SK-N-SH (cell line): ENCODE measurements at regions of chr1 and their contacts with region 1.

Region 1: GRCh38 chr1:204989266-204990058 is 53.5 kb upstream of the CNTN2 start:
- DNase-seq: peak; percentile 95
- H3K4me3 ChIP-seq: no peak overlapping the region; a peak in 1 of 4 replicates
- H3K27ac ChIP-seq: no peak overlapping the region
- H3K4me1 ChIP-seq: peaks cover 0 to 2% of the 10 kb centered on the region in 2 experiments; a peak in 2 of 4 replicates
- H3K27me3 ChIP-seq: no peaks in the 10 kb centered on the region
- CTCF ChIP-seq: peak; percentile 98
- EP300 ChIP-seq: no peak
- RAD21 ChIP-seq: peak; percentile 99

Region 2: DNA sequence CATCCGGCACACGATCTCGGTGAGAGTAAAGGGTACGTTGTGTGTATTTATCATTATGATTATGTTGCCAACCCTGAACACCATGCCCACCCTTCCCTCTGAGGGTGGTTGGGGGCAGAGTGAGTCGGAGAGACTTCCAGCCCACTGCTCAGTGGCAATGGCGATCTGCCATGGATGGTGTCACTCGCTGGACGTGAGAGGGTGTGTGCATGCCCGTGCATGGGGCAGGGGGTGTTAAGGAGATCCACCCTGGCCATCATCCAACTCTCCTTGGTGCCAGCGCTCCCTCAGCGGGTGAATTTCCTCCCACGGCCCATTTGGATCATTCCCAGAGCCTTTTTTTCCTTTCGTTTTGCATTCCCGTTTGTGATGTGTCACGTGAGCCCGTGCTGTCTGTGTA is 20.5 kb before region 1 on chr1:
- CTCF ChIA-PET with region 1: interaction called, 123 read pairs
- POLR2A ChIA-PET with region 1: no interaction called
- DNase-seq: no peak
- H3K4me3 ChIP-seq: no peak overlapping the region
- H3K27ac ChIP-seq: no peak overlapping the region
- H3K4me1 ChIP-seq: peaks cover 0 to 11% of the 10 kb centered on the region in 2 experiments; a peak in 2 of 4 replicates
- H3K27me3 ChIP-seq: no peaks in the 10 kb centered on the region
- CTCF ChIP-seq: no peak
- EP300 ChIP-seq: no peak
- RAD21 ChIP-seq: no peak

Region 3: GRCh38 chr1:205013683-205014367 is 24.4 kb after region 1 on chr1:
- CTCF ChIA-PET with region 1: interaction called, 13 read pairs
- POLR2A ChIA-PET with region 1: no interaction called
- DNase-seq: peak; percentile 71
- H3K4me3 ChIP-seq: no peak overlapping the region
- H3K27ac ChIP-seq: peak overlapping the region in 1 of 2 experiments; percentile 47; a peak in 1 of 4 replicates
- H3K4me1 ChIP-seq: peaks cover 0 to 17% of the 10 kb centered on the region in 2 experiments; a peak in 3 of 4 replicates
- H3K27me3 ChIP-seq: no peaks in the 10 kb centered on the region
- CTCF ChIP-seq: no peak
- EP300 ChIP-seq: no peak
- RAD21 ChIP-seq: no peak

Region 4: DNA sequence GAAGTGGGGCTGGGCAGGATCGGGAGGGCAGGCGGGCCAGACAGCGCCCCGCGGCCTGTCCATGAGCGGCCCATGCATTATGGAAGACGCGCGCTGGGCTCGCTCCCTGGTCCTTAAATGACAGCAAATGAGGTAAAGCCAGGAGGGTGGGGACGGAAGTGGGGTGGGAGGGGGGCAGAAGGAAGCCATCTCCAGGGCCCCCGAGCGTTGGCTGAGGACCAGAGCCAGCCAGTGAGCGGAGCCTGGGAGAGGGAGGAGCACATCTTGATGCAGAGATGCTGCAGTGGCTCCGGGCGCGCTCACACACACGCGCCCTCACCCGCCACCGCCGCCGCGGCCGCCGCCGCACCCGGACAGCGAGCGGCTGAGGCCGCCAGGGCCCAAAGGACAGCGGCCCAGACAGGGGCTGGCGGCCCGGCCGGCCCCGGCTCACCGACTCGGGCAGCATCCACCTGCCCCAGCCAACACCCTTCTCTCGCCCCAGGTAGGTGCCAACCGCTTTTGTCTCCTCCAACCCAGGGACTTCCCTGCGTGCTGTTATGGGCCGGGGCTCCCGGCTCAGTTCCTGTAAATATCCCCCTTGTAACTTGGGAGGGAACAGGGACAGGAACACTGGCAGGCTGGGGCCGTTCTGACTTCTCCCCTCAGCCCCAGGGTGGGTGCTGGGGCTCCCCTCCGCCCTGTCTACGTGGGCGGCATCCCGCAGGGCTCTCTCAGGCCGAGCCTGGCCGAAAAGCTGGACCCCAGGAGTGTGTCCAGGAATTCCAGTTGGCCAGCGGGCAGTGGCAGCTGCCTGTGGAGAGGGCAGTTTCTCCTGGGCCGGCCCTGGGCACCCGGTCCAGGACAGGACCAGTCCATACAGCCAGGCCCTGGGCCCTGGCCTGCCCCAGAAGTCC is 53.7 kb after region 1 on chr1 and contains the start of gene CNTN2:
- CTCF ChIA-PET with region 1: interaction called, 756 read pairs
- POLR2A ChIA-PET with region 1: no interaction called
- DNase-seq: peak; percentile 93
- H3K4me3 ChIP-seq: no peak within 1 kb of the TSS; a peak in 1 of 4 replicates
- H3K27ac ChIP-seq: no peak within 1 kb of the TSS
- H3K4me1 ChIP-seq: peaks cover 0 to 7% of the 10 kb centered on the region in 2 experiments; a peak in 1 of 4 replicates
- H3K27me3 ChIP-seq: peaks cover 60% of the 10 kb centered on the region
- CTCF ChIP-seq: no peak
- EP300 ChIP-seq: no peak
- RAD21 ChIP-seq: no peak
- polyA plus RNA-seq, gene CNTN2: 0.02 and 0.03 TPM in 2 replicates

Region 5: DNA sequence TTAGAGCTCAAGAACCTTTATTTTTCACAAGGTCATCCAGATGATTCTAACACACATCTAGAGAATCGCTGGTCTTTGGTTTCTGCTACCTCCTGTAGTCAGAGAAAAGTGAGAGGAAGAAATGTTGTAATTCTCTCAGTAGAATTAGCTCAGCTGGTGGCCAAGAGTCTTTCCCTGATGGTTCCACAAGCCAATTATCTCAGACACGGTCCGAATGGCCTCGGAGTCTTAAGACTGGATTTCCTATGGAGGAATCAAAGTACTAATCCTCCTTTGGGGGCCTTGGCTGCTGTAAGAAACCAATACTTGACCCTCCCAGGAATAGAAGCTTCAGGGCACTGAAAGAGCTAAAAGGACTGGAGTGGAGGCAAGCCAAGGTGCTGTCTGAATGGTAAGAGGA is 93.0 kb after region 1 on chr1:
- CTCF ChIA-PET with region 1: interaction called, 45 read pairs
- POLR2A ChIA-PET with region 1: no interaction called
- DNase-seq: no peak
- H3K4me3 ChIP-seq: no peak overlapping the region
- H3K27ac ChIP-seq: no peak overlapping the region
- H3K4me1 ChIP-seq: no peaks in the 10 kb centered on the region
- H3K27me3 ChIP-seq: no peaks in the 10 kb centered on the region
- CTCF ChIP-seq: no peak
- EP300 ChIP-seq: no peak
- RAD21 ChIP-seq: no peak

Region 6: DNA sequence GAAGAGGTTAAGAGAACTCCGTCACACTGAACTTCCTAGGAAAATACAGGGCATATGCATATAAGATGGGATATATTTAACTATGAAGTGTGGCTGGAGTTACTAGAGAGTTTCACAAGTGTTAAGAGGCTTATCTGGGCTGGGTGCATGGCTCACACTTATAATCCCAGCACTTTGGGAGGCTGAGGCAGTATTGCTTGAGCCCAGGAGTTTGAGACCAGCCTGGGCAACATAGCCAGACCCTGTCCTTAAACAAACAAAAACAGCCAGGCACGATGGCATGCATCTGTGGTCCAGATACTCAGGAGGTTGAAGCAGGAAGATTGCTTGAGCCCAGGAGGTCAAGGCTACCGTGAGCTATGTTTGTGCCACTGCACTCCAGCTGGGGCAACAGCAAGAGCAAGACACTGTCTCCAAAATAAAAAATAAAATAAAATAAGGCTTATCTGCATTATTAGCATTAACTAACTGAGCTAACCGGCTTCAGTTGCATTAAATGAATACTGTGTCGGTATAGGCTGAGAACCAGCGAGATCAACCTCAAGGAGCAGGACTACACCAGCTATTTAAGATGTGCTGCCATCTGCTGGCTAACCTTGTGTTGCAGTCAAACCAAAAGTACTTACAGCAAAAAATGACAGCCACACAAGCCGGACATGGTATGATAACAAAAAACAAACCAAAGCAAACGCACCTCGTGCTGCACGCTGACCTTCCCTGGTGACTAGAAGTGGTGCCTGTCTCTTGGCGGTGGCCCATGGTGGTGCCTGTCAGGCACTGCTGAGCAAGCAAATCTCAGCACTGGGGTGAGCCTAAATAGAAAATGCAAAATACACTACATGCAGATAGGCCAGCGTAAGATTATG is 152.0 kb after region 1 on chr1:
- CTCF ChIA-PET with region 1: interaction called, 22 read pairs
- POLR2A ChIA-PET with region 1: no interaction called
- DNase-seq: peak; percentile 67
- H3K4me3 ChIP-seq: peak overlapping the region in 1 of 2 experiments; percentile 33; a peak in 1 of 4 replicates
- H3K27ac ChIP-seq: no peak overlapping the region
- H3K4me1 ChIP-seq: peaks cover 5 to 10% of the 10 kb centered on the region in 2 experiments
- H3K27me3 ChIP-seq: no peaks in the 10 kb centered on the region
- CTCF ChIP-seq: peak; percentile 94
- EP300 ChIP-seq: no peak
- RAD21 ChIP-seq: peak; percentile 67

Region 7: GRCh38 chr1:205211169-205211838 is 221.8 kb after region 1 on chr1 and contains the start of gene DSTYK:
- CTCF ChIA-PET with region 1: no interaction called
- POLR2A ChIA-PET with region 1: no interaction called
- DNase-seq: peak; percentile 92
- H3K4me3 ChIP-seq: peak within 1 kb of the TSS; percentile 91 to 99
- H3K27ac ChIP-seq: peak within 1 kb of the TSS; percentile 86 to 89
- H3K4me1 ChIP-seq: peaks cover 3 to 5% of the 10 kb centered on the region in 2 experiments; a peak in 1 of 4 replicates
- H3K27me3 ChIP-seq: no peaks in the 10 kb centered on the region
- CTCF ChIP-seq: no peak; the same call in 1 of the 2 replicates
- EP300 ChIP-seq: no peak
- RAD21 ChIP-seq: 0 out of 2 replicates have a peak, but pooled peaks have one; percentile 3
- polyA plus RNA-seq, gene DSTYK: 4.4 and 6.4 TPM in 2 replicates